ENCODE measurements at regions of chr3 and their contacts with region 1.

Region 1: GRCh38 chr3:86563400-86563970 is 427.5 kb downstream of the VGLL3 start:
- DNase-seq: no peak
- H3K4me3 Mint-ChIP-seq: no peak overlapping the region
- H3K27ac Mint-ChIP-seq: no peak overlapping the region
- H3K4me1 Mint-ChIP-seq: no peaks in the 10 kb centered on the region
- H3K27me3 Mint-ChIP-seq: no peaks in the 10 kb centered on the region
- CTCF ChIP-seq: peak; percentile 41

Region 2: DNA sequence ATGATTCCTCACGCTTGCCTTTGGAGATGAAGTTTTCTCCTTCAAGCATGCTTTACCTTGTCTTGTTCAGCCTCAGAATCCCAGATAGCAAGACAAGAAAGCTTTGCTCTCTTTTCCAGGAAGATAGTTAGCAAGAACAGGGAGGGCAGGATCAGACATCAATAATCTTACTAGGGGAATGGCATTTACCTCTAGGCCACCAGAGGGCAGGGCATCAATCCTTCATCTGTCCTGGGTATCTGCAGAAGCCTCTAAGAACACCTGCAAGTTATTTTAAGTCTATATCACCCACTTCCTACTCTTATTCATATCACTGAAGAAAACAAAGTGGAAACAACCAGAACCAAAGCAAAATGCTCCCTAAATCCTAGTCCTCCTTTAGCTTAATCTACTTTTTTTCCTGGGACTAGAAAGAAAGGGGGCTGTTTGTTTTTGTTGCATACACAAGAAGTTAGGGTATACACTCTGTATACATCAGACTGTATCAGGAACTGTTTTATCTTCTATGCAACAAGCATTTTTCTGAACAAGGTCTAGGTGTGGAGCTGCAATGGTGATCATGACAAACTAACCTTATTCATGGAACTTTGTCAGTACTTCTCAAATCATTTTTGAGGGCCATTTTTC is 742.2 kb before region 1 on chr3:
- CTCF ChIA-PET with region 1: no interaction called
- intact Hi-C with region 1: loop called (anchors 1 kb)
- DNase-seq: peak; percentile 51
- H3K4me3 Mint-ChIP-seq: no peak overlapping the region
- H3K27ac Mint-ChIP-seq: no peak overlapping the region
- H3K4me1 Mint-ChIP-seq: no peaks in the 10 kb centered on the region
- H3K27me3 Mint-ChIP-seq: no peaks in the 10 kb centered on the region
- CTCF ChIP-seq: peak; percentile 49

Region 3: DNA sequence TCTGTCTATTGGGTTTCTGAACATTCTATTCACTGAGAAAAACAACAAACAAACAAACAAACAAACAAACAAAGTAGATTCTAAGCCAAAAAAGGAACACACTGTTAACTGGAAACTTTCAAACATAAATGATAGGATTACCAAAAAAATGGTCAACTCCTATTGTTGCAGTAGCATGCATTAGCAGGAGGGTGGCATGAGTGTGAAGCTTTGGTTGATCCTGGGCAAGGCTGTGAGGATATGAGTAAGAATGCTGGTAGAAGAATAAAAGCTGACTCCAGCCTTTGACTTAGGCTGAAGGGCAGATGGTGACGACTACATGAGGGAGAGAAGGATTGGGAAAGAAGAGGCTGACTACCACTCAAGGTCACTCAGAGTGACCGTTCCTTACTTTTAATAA is 382.8 kb before region 1 on chr3:
- CTCF ChIA-PET with region 1: no interaction called
- intact Hi-C with region 1: loop called (anchors 1 kb)
- DNase-seq: peak; percentile 39
- H3K4me3 Mint-ChIP-seq: no peak overlapping the region
- H3K27ac Mint-ChIP-seq: no peak overlapping the region
- H3K4me1 Mint-ChIP-seq: no peaks in the 10 kb centered on the region
- H3K27me3 Mint-ChIP-seq: no peaks in the 10 kb centered on the region
- CTCF ChIP-seq: no peak

Region 4: DNA sequence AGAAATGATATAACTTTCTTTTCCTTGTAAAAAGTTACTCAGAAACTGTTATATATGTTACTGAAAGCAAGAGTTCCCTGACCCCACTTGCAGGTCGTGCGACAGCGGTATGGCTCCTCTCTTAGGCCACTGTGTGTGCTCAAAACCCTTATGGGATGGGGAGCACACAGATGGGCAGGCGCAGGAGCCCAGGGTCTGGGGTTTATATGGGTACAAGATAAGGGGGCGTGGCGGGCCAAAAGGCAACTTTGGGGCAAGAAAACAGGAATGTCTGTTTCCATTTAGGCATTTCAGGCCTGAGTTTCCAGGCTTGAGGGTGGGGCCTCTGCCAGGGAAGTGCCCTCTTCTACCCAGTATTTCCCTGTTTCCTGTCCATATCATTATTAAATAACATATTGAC is 309.0 kb before region 1 on chr3:
- CTCF ChIA-PET with region 1: no interaction called
- intact Hi-C with region 1: loop called (anchors 5 kb)
- DNase-seq: no peak
- H3K4me3 Mint-ChIP-seq: no peak overlapping the region
- H3K27ac Mint-ChIP-seq: no peak overlapping the region
- H3K4me1 Mint-ChIP-seq: peaks cover 10% of the 10 kb centered on the region
- H3K27me3 Mint-ChIP-seq: no peaks in the 10 kb centered on the region
- CTCF ChIP-seq: no peak

Region 5: GRCh38 chr3:86388820-86389219 is 174.7 kb before region 1 on chr3:
- CTCF ChIA-PET with region 1: no interaction called
- intact Hi-C with region 1: loop called (anchors 1 kb)
- DNase-seq: peak; percentile 34
- H3K4me3 Mint-ChIP-seq: peak overlapping the region; percentile 53
- H3K27ac Mint-ChIP-seq: peak overlapping the region; percentile 83
- H3K4me1 Mint-ChIP-seq: peaks cover 14% of the 10 kb centered on the region
- H3K27me3 Mint-ChIP-seq: no peaks in the 10 kb centered on the region
- CTCF ChIP-seq: peak; percentile 30

Region 6: DNA sequence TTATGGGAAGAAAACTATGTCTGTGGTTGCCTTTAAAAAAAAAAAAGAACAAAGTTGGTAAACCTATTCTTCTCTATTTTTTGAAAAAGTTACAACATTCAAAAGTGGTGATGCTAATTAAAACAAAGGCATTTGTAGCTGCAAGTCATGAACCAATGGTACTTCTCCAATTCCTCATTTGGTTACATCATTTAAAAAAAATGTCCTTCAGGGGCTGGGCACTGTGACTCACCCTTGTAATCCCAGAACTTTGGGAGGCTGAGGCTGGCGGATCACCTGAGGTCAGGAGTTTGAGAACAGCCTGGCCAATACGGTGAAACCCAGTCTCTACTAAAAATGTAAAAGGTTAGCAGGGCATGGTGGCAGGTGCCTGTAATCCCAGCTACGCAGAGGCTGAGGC is 147.2 kb before region 1 on chr3:
- CTCF ChIA-PET with region 1: no interaction called
- intact Hi-C with region 1: no loop called
- DNase-seq: no peak
- H3K4me3 Mint-ChIP-seq: no peak overlapping the region
- H3K27ac Mint-ChIP-seq: no peak overlapping the region
- H3K4me1 Mint-ChIP-seq: no peaks in the 10 kb centered on the region
- H3K27me3 Mint-ChIP-seq: no peaks in the 10 kb centered on the region
- CTCF ChIP-seq: no peak

Measured in Calu3 (cell line).